ENCODE measurements at regions of chr5 and their contacts with region 1.

Region 1: DNA sequence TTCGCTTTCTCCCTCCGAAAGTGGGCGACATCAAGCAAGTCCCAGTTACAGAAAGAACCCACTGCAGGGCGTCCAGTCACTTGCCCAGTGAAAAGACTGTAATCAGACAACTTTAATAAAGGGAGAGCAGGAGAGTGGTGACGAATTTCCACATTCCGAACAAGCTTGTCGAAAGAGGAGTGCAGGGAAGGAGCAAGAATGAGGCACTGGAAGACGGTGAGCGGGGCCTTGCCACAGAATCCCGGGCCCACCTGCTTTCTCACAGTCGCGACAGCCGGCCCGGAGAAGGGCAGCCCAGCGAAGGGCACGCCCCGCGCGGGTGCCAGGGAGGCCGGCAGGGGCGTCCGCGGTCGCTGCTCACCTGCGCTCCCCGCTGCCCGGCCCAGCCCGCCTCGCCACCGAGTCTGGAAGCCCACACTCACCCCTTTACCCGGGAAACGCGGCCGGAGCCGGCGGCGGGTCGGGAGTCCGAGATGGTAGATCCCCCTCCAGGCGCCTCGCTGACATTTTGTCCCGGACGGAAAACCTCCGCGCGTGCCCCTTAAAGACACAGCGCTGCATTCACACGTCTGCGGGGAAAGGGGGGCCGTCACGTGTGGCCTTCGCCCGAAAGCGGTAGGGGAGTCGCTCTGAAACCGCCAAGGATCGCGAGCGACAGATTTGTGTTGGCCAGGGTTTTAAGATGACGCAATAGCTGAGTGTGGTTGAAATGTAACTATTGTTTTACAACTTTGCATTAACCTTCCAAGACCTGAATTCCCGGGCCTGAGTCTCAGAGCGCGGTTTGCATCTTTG is at the start of gene ZBED3:
- DNase-seq: peak; percentile 81 to 85
- ATAC-seq: peak; percentile 85
- total RNA-seq, gene ZBED3: 8.1 to 9.5 TPM

Region 2: DNA sequence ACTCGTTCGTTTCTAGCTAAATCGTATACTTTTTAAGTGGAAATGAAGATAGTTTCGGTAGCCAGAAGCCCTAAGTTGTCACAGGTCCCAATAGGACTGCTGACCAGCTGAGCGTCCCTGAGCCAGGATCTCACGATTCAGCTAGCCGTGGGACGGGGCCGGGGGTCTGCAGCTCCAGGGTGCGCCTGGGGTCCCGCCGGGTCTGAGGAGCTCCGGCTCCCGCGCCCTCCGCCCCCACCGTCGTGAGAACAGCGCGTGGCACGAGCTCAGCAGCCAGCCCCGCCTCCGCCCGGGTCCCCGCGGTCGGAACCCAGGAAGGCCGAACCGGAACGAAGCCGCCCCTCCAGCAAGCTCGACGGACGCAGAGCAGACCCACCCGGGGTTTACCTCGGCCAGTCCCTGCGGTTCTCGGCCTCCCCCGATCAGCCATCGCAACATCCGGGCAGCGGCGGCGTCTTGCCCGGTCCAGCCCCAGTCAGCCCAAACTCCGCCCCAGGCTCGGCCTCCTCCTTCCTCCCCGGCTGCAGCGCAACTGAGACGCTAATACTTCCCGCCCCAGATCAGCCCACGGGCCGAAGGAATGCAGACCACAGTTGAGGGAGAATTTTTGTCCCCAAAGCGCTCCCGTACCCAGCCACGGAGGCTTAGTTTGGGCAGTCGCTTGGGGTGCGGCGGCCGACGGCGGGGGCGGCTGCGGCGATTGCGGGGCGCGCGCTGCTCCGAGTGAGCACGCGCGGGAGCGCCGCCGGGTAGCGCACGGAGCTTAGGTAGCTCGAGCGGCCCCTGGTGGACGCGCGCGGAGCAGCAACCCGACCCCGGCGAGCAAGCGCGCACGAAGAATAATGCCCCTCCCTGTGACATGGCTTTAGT is 405.1 kb after region 1 on chr5 and contains the start of gene WDR41:
- intact Hi-C with region 1: loop called in 1 of 2 experiments (anchors 10 kb)
- DNase-seq: peak; percentile 90 to 95
- ATAC-seq: peak; percentile 93
- total RNA-seq, gene WDR41: 18.3 to 28.7 TPM